ENCODE measurements at regions of chr14 and their contacts with region 1.

Region 1: GRCh38 chr14:43438056-43438455 is 1069.0 kb downstream of the FSCB start:
- DNase-seq: no peak
- H3K4me3 ChIP-seq: no peak overlapping the region
- H3K27ac ChIP-seq: no peak overlapping the region
- H3K4me1 ChIP-seq: no peaks in the 10 kb centered on the region
- CTCF ChIP-seq: no peak

Region 2: GRCh38 chr14:43418324-43418723 is 19.7 kb before region 1 on chr14:
- CTCF ChIA-PET with region 1: no interaction called
- POLR2A ChIA-PET with region 1: no interaction called
- intact Hi-C with region 1: no loop called
- DNase-seq: no peak
- H3K4me3 ChIP-seq: no peak overlapping the region
- H3K27ac ChIP-seq: no peak overlapping the region
- H3K4me1 ChIP-seq: no peaks in the 10 kb centered on the region
- CTCF ChIP-seq: no peak

Region 3: GRCh38 chr14:43503590-43503907 is 65.5 kb after region 1 on chr14:
- CTCF ChIA-PET with region 1: no interaction called
- POLR2A ChIA-PET with region 1: no interaction called
- intact Hi-C with region 1: loop called (anchors 2 kb)
- DNase-seq: no peak
- H3K4me3 ChIP-seq: no peak overlapping the region
- H3K27ac ChIP-seq: no peak overlapping the region
- H3K4me1 ChIP-seq: no peaks in the 10 kb centered on the region
- CTCF ChIP-seq: no peak

Region 4: DNA sequence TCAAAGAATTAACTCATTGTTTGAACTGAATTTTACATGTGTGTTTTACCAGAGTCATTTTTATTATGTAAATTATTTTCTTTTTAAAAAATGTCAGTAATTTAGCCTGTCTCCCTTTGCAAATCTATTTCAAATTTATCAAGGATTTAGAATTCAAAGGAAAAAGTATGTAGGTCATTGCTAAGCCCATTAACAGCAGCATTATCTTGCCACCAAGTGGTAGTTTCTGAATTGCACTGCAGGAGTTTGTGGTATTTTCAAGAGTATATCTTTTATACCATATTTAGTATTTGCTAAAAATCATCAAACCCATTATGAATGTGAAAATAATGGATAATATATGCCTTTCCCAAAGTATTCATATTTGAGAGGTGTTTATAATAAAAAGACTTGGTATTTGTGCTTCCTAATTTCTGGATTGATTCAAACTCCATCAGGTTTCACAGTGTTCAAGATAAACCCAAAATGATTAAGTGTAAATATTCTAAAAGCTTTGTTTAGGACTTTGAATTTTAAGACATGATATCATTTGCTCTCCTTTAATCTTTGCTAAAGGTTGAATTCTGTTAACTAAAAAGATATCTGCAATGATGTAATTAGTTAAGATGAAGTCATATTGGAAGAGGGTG is 357.7 kb after region 1 on chr14:
- CTCF ChIA-PET with region 1: no interaction called
- POLR2A ChIA-PET with region 1: no interaction called
- intact Hi-C with region 1: no loop called
- DNase-seq: no peak
- H3K4me3 ChIP-seq: no peak overlapping the region
- H3K27ac ChIP-seq: no peak overlapping the region
- H3K4me1 ChIP-seq: no peaks in the 10 kb centered on the region
- CTCF ChIP-seq: peak; percentile 24; the same call in 1 of the 2 replicates